ENCODE measurements at regions of chr14 and their contacts with region 1.

Region 1: GRCh38 chr14:39432179-39432618 is at the start of gene FBXO33:
- DNase-seq: peak; percentile 99
- H3K4me3 Mint-ChIP-seq: peak within 1 kb of the TSS; percentile 98
- H3K27ac Mint-ChIP-seq: peak within 1 kb of the TSS; percentile 100
- H3K4me1 Mint-ChIP-seq: peaks cover 32% of the 10 kb centered on the region
- H3K27me3 Mint-ChIP-seq: no peaks in the 10 kb centered on the region
- total RNA-seq, gene FBXO33: 17.9 and 18.9 TPM in 2 replicates

Region 2: DNA sequence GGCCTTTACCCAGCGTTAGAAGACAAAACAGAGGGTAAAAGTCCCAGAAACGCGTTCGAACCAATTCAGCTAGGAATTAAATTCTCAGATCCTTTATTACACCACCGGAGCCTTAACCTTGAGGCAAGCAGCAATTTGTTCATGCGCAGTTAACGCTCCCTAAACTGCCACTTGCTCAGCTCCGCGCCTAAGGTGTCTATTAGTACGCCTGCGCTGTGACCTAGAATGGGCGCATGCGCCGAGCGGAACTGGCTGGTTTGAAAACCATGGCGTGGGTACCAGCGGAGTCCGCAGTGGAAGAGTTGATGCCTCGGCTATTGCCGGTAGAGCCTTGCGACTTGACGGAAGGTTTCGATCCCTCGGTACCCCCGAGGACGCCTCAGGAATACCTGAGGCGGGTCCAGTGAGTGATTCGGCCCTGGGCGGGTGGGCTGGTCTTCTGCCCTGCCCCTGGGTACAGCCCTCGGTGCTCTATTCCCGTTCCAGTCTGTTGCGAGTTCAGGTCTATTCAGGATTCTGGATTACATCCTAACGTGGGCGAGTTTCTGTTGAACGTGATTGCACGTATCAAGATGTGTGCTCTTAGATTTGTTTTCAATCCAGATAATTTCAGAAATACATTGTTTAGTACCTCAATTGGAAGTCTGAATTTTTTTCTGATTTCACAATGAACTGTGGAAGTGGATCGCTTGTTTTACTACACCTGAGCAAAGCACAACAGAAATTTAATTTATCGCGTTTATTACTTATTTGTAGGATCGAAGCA is 317.9 kb before region 1 on chr14 and contains the start of gene GEMIN2:
- intact Hi-C with region 1: loop called (anchors 1 kb)
- DNase-seq: peak; percentile 98
- H3K4me3 Mint-ChIP-seq: peak within 1 kb of the TSS; percentile 98
- H3K27ac Mint-ChIP-seq: peak within 1 kb of the TSS; percentile 97
- H3K4me1 Mint-ChIP-seq: peaks cover 18% of the 10 kb centered on the region
- H3K27me3 Mint-ChIP-seq: no peaks in the 10 kb centered on the region
- total RNA-seq, gene GEMIN2: 23.1 and 24.9 TPM in 2 replicates

Region 3: DNA sequence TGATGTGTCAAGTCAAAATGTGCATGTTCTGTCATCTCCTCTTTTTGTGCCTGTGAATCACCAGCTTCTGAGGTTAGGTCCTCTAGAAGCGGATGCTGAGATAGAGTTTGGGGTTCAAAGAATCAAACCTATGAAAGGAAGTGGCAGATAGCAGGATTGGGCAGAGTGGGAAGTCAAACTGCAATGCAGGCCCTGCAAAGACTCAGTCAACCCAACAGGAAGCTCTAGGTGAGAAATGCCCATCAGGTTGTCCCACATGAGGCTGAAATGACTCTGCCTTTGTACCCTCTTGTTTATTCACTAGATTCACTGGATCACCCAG is 203.0 kb before region 1 on chr14:
- intact Hi-C with region 1: loop called (anchors 1 kb)
- DNase-seq: peak; percentile 91
- H3K4me3 Mint-ChIP-seq: peak overlapping the region; percentile 54
- H3K27ac Mint-ChIP-seq: peak overlapping the region; percentile 90
- H3K4me1 Mint-ChIP-seq: peaks cover 38% of the 10 kb centered on the region
- H3K27me3 Mint-ChIP-seq: no peaks in the 10 kb centered on the region

Region 4: DNA sequence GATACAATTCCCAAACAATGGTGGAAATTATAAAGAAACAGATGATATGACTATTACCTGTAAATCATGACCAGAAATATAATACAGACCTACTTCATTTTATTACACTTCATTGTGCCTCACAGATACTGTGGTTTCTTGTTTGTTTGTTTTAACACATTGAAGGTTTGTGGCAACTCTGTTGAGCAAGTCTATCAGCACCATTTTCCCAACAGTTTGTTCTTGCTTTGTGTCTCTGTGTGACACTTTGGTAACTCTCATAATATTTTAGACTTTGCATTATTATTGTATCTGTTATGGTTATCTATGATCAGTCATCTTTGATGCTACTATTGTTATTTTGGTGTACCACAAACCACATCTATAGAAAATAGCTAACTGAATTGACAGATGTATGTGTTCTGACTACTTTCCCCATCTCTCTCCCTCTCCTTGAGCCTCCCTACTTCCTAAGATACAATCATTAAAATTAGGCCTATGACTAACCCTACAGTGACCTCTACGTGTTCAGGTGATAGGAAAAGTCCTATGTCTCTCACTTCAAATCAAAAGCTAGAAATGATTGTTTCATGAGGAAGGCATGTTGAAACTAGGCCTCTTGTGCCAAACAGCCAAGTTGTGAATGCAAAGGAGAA is 49.1 kb before region 1 on chr14:
- intact Hi-C with region 1: loop called (anchors 2 kb)
- DNase-seq: no peak
- H3K4me3 Mint-ChIP-seq: no peak overlapping the region
- H3K27ac Mint-ChIP-seq: peak overlapping the region; percentile 8
- H3K4me1 Mint-ChIP-seq: peaks cover 11% of the 10 kb centered on the region
- H3K27me3 Mint-ChIP-seq: no peaks in the 10 kb centered on the region

Region 5: GRCh38 chr14:39491134-39491571 is 59.0 kb after region 1 on chr14:
- intact Hi-C with region 1: no loop called
- DNase-seq: no peak
- H3K4me3 Mint-ChIP-seq: no peak overlapping the region
- H3K27ac Mint-ChIP-seq: no peak overlapping the region
- H3K4me1 Mint-ChIP-seq: peaks cover 2% of the 10 kb centered on the region
- H3K27me3 Mint-ChIP-seq: peaks cover 2% of the 10 kb centered on the region